ENCODE measurements at regions of chr13 and their contacts with region 1.

Region 1: GRCh38 chr13:32381539-32381938 is 46.4 kb downstream of the N4BP2L1 start:
- DNase-seq: no peak

Region 2: GRCh38 chr13:32548837-32549236 is 167.3 kb after region 1 on chr13:
- intact Hi-C with region 1: loop called (anchors 10 kb)
- DNase-seq: no peak

Region 3: DNA sequence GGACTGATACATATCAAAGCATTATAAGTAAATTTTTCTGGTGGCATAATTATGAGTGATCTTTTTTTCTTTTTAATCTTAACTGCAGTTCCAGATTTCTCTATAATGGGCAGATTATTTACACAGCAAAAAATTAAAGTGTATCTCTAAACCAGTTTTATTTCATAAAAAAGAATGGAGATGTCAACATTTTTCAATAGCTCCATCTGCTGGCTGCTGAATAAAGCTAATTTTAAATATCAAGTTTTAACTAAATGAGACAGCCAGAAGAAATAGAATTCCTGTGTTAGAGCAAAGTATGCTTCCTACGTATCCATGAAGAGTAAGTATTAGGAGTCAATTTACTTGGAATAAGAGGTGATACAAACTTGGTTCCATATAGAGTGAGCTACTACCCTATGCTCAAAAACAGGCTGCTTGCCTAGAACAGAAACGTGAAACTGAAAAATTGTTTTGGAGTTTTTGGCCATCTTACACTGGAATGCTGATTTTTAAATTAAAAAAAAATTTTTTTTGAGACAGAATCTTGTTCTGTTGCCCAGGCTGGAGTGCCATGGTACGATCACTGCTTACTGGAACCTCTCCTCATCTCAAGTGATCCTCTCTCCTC is 199.7 kb after region 1 on chr13:
- intact Hi-C with region 1: loop called (anchors 2 kb)
- DNase-seq: no peak

Measured in cardiac septum (tissue), 1 donor.